ENCODE measurements at regions of chr18 and their contacts with region 1.

Region 1: GRCh38 chr18:9419956-9420631 is 55.2 kb upstream of the RALBP1 start:
- DNase-seq: no peak
- ATAC-seq: peak; percentile 39; the same call in 2 of the 3 replicates
- H3K4me3 ChIP-seq: no peak overlapping the region
- H3K27ac ChIP-seq: no peak overlapping the region
- H3K4me1 ChIP-seq: peaks cover 7% of the 10 kb centered on the region; the same call in 1 of the 2 replicates
- H3K27me3 ChIP-seq: no peaks in the 10 kb centered on the region; a peak in 1 of 5 replicates
- CTCF ChIP-seq: no peak
- EP300 ChIP-seq: no peak
- POLR2A ChIP-seq: no peak
- RAD21 ChIP-seq: no peak

Region 2: DNA sequence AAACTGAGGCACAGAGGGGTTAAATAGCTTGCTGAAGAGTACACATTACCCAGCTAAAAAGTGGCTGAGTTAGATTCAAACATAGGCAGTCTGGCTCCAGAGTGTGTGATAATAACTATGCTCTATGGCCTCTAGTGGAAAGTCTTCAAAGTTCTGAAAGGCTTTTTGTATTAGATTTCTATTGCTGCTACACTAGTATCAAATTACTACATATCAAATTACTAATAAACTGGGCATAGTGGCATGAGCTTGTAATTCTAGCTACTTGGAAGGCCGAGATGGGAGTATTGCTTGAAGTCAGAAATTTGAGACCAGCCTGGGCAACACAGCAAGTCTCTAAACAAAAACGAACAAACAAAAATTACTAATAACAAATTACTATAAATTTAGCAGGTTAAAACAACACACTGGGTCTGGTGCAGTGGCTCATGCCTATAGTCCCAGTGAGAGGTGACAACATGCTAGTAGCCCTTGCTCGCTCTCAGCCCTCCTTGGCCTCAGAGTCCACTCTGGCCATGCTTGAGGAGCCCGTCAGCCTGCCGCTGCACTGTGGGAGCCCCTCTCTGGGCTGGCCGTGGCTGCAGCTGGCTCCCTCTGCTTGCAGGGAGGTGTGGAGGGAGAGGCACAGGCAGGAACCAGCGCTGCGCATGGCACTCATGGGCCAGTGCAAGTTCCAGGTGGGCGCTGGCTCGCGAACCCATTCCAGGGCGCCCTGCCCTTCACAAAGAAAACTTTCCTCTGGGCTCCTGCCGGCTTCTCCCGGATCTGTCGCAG is 123.7 kb before region 1 on chr18:
- CTCF ChIA-PET with region 1: no interaction called
- POLR2A ChIA-PET with region 1: no interaction called
- in situ Hi-C with region 1: no loop called
- intact Hi-C with region 1: no loop called
- DNase-seq: no peak
- ATAC-seq: no peak
- H3K4me3 ChIP-seq: no peak overlapping the region
- H3K27ac ChIP-seq: no peak overlapping the region
- H3K4me1 ChIP-seq: peaks cover 5% of the 10 kb centered on the region; the same call in 1 of the 2 replicates
- H3K27me3 ChIP-seq: no peaks in the 10 kb centered on the region; a peak in 1 of 5 replicates
- CTCF ChIP-seq: no peak
- EP300 ChIP-seq: no peak
- POLR2A ChIP-seq: no peak
- RAD21 ChIP-seq: no peak

Region 3: DNA sequence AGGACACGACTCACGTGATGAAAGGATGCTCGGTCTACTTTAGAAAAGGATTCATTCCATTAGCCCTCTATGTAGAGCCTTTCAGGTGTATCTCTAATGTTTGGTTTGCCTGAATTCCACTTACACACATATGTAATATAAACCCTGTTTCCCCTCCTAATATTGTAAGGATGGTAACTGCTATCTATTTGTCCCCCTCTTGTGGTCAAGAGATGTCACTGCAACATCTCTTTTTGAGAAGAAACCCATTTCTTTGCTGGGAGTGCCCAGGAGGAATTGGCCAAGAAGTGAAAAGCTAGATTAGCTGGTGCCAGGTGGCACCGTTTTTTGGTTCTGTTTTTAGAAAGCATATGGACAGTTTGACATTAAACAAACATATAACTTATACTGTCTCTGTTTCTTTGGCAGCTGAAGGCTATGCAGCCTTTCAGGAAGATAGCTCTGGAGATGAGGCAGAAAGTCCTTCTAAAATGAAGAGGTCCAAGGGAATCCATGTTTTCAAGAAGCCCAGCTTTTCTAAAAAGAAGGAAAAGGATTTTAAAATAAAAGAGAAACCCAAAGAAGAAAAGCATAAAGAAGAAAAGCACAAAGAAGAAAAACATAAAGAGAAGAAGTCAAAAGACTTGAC is 96.5 kb after region 1 on chr18:
- CTCF ChIA-PET with region 1: no interaction called
- POLR2A ChIA-PET with region 1: no interaction called
- in situ Hi-C with region 1: no loop called
- intact Hi-C with region 1: loop called (anchors 5 kb)
- DNase-seq: peak; percentile 14
- ATAC-seq: no peak
- H3K4me3 ChIP-seq: no peak overlapping the region
- H3K27ac ChIP-seq: no peak overlapping the region
- H3K4me1 ChIP-seq: peaks cover 17% of the 10 kb centered on the region
- H3K27me3 ChIP-seq: no peaks in the 10 kb centered on the region
- CTCF ChIP-seq: peak; percentile 79
- EP300 ChIP-seq: no peak
- POLR2A ChIP-seq: no peak
- RAD21 ChIP-seq: peak; percentile 56; the same call in 1 of the 2 replicates

Measured in HepG2 (cell line).